SK-N-SH (cell line): ENCODE measurements at regions of chr20 and their contacts with region 1.

Region 1: GRCh38 chr20:50189681-50190582 is 698 bp upstream of the CEBPB start:
- DNase-seq: peak; percentile 100
- H3K4me3 ChIP-seq: peak overlapping the region; percentile 73 to 74
- H3K27ac ChIP-seq: peak overlapping the region in 1 of 2 experiments; percentile 93; a peak in 3 of 4 replicates
- H3K4me1 ChIP-seq: peaks cover 4 to 19% of the 10 kb centered on the region in 2 experiments; a peak in 3 of 4 replicates
- H3K27me3 ChIP-seq: no peaks in the 10 kb centered on the region
- CTCF ChIP-seq: peak; percentile 68
- EP300 ChIP-seq: no peak
- RAD21 ChIP-seq: peak; percentile 88

Region 2: DNA sequence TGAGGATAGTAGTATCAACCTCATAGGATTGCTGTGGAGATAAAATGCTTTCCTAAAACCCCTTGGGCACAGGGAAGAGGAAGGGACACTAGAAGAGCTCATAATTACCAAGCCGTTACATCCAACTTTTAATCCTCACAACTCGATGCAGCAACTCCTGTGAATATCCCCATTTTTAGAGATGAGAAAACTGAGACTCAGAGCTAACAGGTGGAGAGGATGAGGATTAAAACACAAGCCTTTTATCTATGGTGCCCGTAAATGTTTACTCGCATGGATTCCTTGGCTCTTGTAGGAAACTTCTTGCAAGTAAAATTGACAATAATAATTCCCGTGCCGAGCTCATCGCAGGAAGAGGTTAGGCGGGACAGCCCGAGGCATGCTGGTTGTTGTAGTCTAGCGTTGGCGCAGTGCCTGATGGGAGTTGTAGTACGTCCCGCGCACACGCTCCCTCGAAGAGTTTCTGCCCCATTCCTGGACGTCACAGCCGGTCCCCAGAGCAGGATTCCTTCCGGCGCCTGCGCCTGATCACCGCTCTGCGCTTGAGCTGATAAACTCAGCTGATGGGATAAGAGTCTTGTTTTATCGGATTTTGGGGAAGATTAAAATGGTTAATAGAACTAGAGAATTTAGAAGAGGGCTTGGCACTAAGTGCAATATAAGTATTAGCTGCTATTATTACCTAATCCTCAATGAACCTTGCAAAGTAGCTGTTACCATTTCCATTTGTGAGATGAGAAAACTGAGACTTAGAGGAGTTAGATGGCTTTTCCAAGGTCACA is 74.2 kb before region 1 on chr20:
- CTCF ChIA-PET with region 1: interaction called, 231 read pairs
- POLR2A ChIA-PET with region 1: no interaction called
- DNase-seq: peak; percentile 89
- H3K4me3 ChIP-seq: peak overlapping the region; percentile 64 to 70
- H3K27ac ChIP-seq: peak overlapping the region; percentile 52 to 85; a peak in 3 of 4 replicates
- H3K4me1 ChIP-seq: peaks cover 15 to 37% of the 10 kb centered on the region in 2 experiments; a peak in 3 of 4 replicates
- H3K27me3 ChIP-seq: no peaks in the 10 kb centered on the region
- CTCF ChIP-seq: no peak
- EP300 ChIP-seq: no peak
- RAD21 ChIP-seq: no peak

Region 3: DNA sequence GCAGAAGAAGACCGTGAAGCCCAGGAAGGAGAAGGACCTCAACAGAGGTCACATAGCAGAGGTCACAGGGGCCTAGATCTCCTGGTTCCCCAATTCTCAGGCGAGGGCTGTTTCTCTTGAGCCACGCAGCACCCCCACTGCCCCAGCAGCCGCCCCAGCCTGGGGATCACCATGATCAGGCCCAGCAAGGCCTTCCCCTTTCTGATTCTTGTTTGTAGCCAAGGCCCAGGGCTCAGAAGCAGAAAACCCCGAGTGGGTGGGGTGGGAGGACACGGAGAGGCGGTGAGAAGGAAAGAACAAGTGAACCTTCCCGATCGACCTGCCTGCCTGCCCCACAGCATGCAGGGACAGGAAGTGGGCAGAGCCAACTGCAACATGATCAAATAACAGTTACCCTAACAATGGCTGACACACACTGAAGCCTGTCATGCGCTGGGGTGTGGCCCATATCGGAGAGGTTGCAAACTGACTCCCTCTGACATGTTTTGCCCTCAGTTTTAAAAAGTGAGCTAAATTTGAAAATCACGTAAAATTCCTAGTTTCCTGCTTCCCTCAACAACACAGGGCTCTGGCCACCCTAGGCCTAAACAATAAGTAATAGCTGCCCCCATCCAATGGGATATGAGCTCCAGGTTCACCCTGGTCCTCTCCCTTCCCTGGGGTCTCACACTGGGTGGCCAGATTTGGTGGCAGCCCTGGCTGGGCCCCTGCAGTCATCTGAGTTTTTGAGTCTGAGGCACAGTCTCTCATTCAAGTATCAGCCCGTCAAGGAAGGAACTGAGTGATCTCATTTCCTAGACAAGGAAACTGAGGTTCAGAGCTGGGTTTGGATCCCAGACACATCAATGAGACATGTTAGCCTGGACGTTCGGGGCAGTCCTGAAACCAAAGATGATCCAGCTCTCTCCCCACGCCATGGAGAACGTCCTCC is 42.9 kb before region 1 on chr20:
- CTCF ChIA-PET with region 1: no interaction called
- POLR2A ChIA-PET with region 1: no interaction called
- DNase-seq: no peak
- H3K4me3 ChIP-seq: no peak overlapping the region
- H3K27ac ChIP-seq: no peak overlapping the region
- H3K4me1 ChIP-seq: peaks cover 11 to 16% of the 10 kb centered on the region in 2 experiments; a peak in 2 of 4 replicates
- H3K27me3 ChIP-seq: no peaks in the 10 kb centered on the region
- CTCF ChIP-seq: no peak
- EP300 ChIP-seq: no peak
- RAD21 ChIP-seq: no peak

Region 4: GRCh38 chr20:50179507-50180016 is 10.4 kb before region 1 on chr20:
- CTCF ChIA-PET with region 1: interaction called, 21 read pairs
- POLR2A ChIA-PET with region 1: no interaction called
- DNase-seq: no peak
- H3K4me3 ChIP-seq: no peak overlapping the region
- H3K27ac ChIP-seq: no peak overlapping the region
- H3K4me1 ChIP-seq: peaks cover 0 to 2% of the 10 kb centered on the region in 2 experiments; a peak in 1 of 4 replicates
- H3K27me3 ChIP-seq: no peaks in the 10 kb centered on the region
- CTCF ChIP-seq: no peak
- EP300 ChIP-seq: no peak
- RAD21 ChIP-seq: no peak

Region 5: GRCh38 chr20:50200482-50201104 is 10.7 kb after region 1 on chr20:
- CTCF ChIA-PET with region 1: interaction called, 10 read pairs
- POLR2A ChIA-PET with region 1: no interaction called
- DNase-seq: no peak
- H3K4me3 ChIP-seq: no peak overlapping the region
- H3K27ac ChIP-seq: no peak overlapping the region
- H3K4me1 ChIP-seq: no peaks in the 10 kb centered on the region
- H3K27me3 ChIP-seq: no peaks in the 10 kb centered on the region
- CTCF ChIP-seq: no peak
- EP300 ChIP-seq: no peak
- RAD21 ChIP-seq: no peak

Region 6: DNA sequence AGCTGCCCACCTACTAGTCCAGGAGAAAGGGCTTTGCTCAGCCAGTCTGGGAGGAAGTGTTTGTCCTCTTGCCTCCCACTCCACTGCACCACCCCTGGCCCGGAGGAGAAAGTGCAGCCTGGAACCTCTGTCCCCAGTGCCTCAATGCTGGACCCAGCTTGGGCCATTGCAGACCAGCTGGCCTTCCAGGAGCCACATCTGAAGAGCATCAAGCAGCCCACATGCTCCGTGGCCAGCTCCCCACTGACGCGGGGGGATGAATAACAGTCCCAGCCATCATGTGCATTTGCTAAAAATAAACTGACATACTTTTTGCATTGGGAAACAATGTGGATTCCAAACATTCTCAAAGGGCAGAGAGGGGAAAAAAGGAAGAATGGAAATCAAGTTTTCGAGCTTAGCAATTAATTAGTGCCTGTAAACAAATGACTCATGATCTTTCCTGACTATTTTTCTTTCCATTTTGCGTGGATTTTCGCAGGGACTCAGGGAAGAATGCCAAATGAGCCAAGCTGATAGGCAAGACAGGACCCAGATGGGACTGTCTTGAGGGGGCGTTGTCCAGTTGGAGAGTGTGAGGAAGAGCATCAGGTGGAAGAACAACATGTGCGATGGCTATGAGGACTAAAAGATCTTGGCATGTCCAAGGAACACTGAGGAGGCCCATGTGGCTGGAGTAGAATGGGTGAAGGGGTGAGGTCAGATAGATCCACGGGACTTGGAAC is 34.8 kb after region 1 on chr20:
- CTCF ChIA-PET with region 1: no interaction called
- POLR2A ChIA-PET with region 1: no interaction called
- DNase-seq: no peak
- H3K4me3 ChIP-seq: no peak overlapping the region
- H3K27ac ChIP-seq: peak overlapping the region; percentile 23 to 56; a peak in 2 of 4 replicates
- H3K4me1 ChIP-seq: no peaks in the 10 kb centered on the region; a peak in 1 of 4 replicates
- H3K27me3 ChIP-seq: no peaks in the 10 kb centered on the region
- CTCF ChIP-seq: peak; percentile 27
- EP300 ChIP-seq: peak in 1 of 2 experiments; percentile 28; a peak in 1 of 4 replicates
- RAD21 ChIP-seq: no peak

Region 7: DNA sequence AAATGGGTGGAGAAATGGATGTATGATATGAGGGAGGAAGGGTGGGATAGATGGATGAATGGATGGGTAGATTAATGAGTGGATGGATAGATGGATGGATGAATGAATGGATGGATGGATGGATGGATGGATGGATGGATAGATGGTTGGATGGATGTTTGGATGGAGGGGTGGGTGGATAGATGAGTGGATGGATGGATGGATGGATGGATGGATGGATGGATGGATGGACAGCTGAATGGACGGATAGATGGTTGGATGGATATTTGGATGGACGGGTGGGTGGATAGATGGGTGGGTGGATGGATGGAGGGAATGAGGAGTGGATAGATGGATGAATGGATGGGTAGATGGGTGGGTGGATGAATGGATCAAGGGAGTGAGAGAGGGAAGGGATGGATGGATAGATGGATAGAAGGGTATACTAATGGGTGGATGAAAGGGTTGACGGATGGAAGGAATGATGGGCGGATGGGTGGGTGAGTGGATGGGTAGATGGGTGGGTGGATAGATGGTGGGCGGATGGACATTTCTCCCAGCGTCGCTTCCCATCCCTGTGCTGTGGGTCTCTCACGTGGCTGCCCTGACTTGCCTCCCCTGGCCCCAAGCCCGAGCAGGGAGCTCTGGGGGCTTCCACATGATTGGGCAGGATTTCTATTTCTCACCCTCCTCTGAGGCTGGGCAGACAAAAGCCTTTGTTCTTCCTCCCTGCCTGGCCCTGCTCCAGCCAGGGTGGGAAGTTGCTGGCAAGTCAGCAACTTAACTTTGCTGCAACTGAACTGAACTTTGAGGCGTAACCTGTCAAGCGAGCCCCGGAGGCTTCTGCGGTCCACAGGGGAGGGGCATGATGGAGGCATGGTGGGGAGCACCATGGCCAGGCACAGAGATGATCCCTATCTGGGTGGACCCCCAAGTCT is 140.4 kb after region 1 on chr20:
- CTCF ChIA-PET with region 1: no interaction called
- POLR2A ChIA-PET with region 1: no interaction called
- DNase-seq: no peak
- H3K4me3 ChIP-seq: no peak overlapping the region
- H3K27ac ChIP-seq: no peak overlapping the region
- H3K4me1 ChIP-seq: no peaks in the 10 kb centered on the region
- H3K27me3 ChIP-seq: no peaks in the 10 kb centered on the region
- CTCF ChIP-seq: no peak
- EP300 ChIP-seq: no peak
- RAD21 ChIP-seq: no peak

Region 8: GRCh38 chr20:50379049-50379990 is 189.4 kb after region 1 on chr20:
- CTCF ChIA-PET with region 1: interaction called, 41 read pairs
- POLR2A ChIA-PET with region 1: no interaction called
- DNase-seq: peak; percentile 67
- H3K4me3 ChIP-seq: no peak overlapping the region
- H3K27ac ChIP-seq: no peak overlapping the region
- H3K4me1 ChIP-seq: peaks cover 3 to 20% of the 10 kb centered on the region in 2 experiments; a peak in 1 of 4 replicates
- H3K27me3 ChIP-seq: no peaks in the 10 kb centered on the region
- CTCF ChIP-seq: no peak
- EP300 ChIP-seq: 0 out of 4 replicates have a peak, but pooled peaks of 1 of the 2 experiments have one; percentile 7
- RAD21 ChIP-seq: 0 out of 2 replicates have a peak, but pooled peaks have one; percentile 4

Region 9: GRCh38 chr20:50460460-50461267 is 270.7 kb after region 1 on chr20:
- CTCF ChIA-PET with region 1: interaction called, 281 read pairs
- POLR2A ChIA-PET with region 1: interaction called, 3 read pairs
- DNase-seq: peak; percentile 92
- H3K4me3 ChIP-seq: peak overlapping the region in 1 of 2 experiments; percentile 49; a peak in 1 of 4 replicates
- H3K27ac ChIP-seq: no peak overlapping the region
- H3K4me1 ChIP-seq: peaks cover 0 to 8% of the 10 kb centered on the region in 2 experiments; a peak in 2 of 4 replicates
- H3K27me3 ChIP-seq: no peaks in the 10 kb centered on the region
- CTCF ChIP-seq: peak; percentile 86
- EP300 ChIP-seq: no peak
- RAD21 ChIP-seq: peak; percentile 87

Region 10: DNA sequence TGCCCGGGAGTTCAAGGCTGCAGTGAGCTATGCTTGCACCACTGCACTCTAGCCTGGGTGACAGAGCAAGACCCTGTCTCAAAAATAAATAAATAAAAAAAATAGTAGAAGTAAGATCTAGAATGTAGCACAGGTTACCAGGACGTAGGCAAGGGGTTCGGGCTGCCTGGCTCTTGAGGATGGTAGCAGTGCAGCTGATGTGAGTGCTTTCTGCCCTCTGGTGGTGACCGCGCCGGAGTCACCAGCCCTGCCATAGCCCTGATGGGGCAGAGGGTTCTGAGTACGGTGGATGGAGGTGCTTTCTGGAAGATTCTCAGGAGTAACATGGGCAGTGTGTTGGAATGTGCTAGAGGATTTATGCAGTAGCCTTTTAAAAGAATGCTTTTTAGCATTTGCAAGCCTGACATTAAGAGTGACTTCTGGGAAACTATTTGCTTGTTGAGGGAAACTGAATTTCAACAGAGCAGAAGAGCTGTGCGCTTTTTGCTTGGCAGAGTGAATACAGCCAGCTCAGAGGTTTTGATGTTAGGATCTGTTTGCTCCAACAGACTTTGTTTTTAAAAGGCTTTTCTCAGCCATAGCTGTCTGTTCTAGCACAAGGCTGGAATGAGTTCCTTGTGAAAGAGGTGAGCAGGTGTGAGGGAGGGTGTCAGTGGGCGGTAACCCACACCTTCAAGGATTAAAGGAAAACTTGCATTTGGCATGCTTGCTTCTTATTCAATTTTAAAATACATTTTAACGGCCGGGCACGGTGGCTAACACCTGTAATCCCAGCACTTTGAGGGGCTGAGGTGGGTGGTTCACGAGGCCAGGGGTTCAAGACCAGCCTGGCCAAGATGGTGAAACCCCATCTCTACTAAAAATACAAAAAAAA is 386.2 kb after region 1 on chr20:
- CTCF ChIA-PET with region 1: interaction called, 108 read pairs
- POLR2A ChIA-PET with region 1: interaction called, 3 read pairs
- DNase-seq: peak; percentile 70
- H3K4me3 ChIP-seq: no peak overlapping the region
- H3K27ac ChIP-seq: no peak overlapping the region
- H3K4me1 ChIP-seq: peaks cover 22 to 45% of the 10 kb centered on the region in 2 experiments
- H3K27me3 ChIP-seq: no peaks in the 10 kb centered on the region
- CTCF ChIP-seq: peak; percentile 78
- EP300 ChIP-seq: no peak
- RAD21 ChIP-seq: peak; percentile 74